Endothelial cell of umbilical vein (primary cell): ENCODE measurements at regions of chr1 and their contacts with region 1.

Region 1: GRCh38 chr1:151098126-151098525 is 27.6 kb downstream of the GABPB2 start:
- DNase-seq: no peak
- H3K4me3 ChIP-seq: no peak overlapping the region
- H3K27ac ChIP-seq: no peak overlapping the region
- H3K4me1 ChIP-seq: no peaks in the 10 kb centered on the region
- H3K27me3 ChIP-seq: no peaks in the 10 kb centered on the region
- CTCF ChIP-seq: no peak
- POLR2A ChIP-seq: no peak

Region 2: GRCh38 chr1:150798525-150798924 is 299.6 kb before region 1 on chr1:
- CTCF ChIA-PET with region 1: no interaction called
- POLR2A ChIA-PET with region 1: no interaction called
- dilution Hi-C with region 1: no loop called
- intact Hi-C with region 1: no loop called
- DNase-seq: no peak
- H3K4me3 ChIP-seq: no peak overlapping the region
- H3K27ac ChIP-seq: no peak overlapping the region
- H3K4me1 ChIP-seq: peaks cover 3% of the 10 kb centered on the region
- H3K27me3 ChIP-seq: no peaks in the 10 kb centered on the region
- CTCF ChIP-seq: no peak
- POLR2A ChIP-seq: no peak

Region 3: GRCh38 chr1:151070474-151071276 is 27.5 kb before region 1 on chr1 and contains the start of gene GABPB2:
- CTCF ChIA-PET with region 1: interaction called, 19 read pairs
- POLR2A ChIA-PET with region 1: interaction called, 5 read pairs
- dilution Hi-C with region 1: no loop called
- intact Hi-C with region 1: no loop called
- DNase-seq: peak; percentile 95
- H3K4me3 ChIP-seq: peak within 1 kb of the TSS; percentile 44 to 73 (median 62)
- H3K27ac ChIP-seq: peak within 1 kb of the TSS; percentile 80
- H3K4me1 ChIP-seq: no peaks in the 10 kb centered on the region
- H3K27me3 ChIP-seq: no peaks in the 10 kb centered on the region
- CTCF ChIP-seq: peak; percentile 79 to 99
- POLR2A ChIP-seq: no peak
- total RNA-seq, gene GABPB2: 4.3 and 5.0 TPM in 2 replicates

Region 4: DNA sequence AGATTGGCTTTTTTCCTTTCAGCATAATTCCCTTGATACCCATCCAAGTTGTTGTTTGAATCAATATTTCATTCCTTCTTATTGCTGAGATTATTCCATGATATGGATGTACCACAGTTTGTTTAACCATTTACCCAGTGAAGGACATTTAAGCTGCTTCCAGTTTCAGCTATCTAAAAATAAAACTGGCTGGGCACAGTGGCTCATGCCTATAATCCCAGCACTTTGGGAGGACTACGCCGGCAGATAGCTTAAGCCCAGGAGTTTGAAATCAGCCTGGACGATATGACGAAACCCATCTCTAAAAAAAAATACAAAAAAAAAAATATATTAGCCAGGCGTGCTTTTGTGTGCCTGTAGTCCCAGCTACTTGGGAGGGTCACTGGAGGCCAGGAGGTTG is 15.8 kb after region 1 on chr1:
- CTCF ChIA-PET with region 1: interaction called, 25 read pairs
- POLR2A ChIA-PET with region 1: no interaction called
- dilution Hi-C with region 1: no loop called
- intact Hi-C with region 1: no loop called
- DNase-seq: no peak
- H3K4me3 ChIP-seq: no peak overlapping the region
- H3K27ac ChIP-seq: no peak overlapping the region
- H3K4me1 ChIP-seq: no peaks in the 10 kb centered on the region
- H3K27me3 ChIP-seq: no peaks in the 10 kb centered on the region
- CTCF ChIP-seq: no peak
- POLR2A ChIP-seq: no peak

Region 5: GRCh38 chr1:151130987-151131586 is 33.0 kb after region 1 on chr1:
- CTCF ChIA-PET with region 1: interaction called, 53 read pairs
- POLR2A ChIA-PET with region 1: no interaction called
- dilution Hi-C with region 1: no loop called
- intact Hi-C with region 1: no loop called
- DNase-seq: peak; percentile 81
- H3K4me3 ChIP-seq: peak overlapping the region in 1 of 3 experiments; percentile 10
- H3K27ac ChIP-seq: no peak overlapping the region
- H3K4me1 ChIP-seq: peaks cover 6% of the 10 kb centered on the region
- H3K27me3 ChIP-seq: no peaks in the 10 kb centered on the region
- CTCF ChIP-seq: no peak
- POLR2A ChIP-seq: peak; percentile 35

Region 6: GRCh38 chr1:151156515-151156819 is 58.3 kb after region 1 on chr1 and contains the start of gene TNFAIP8L2:
- CTCF ChIA-PET with region 1: interaction called, 623 read pairs
- POLR2A ChIA-PET with region 1: interaction called, 16 read pairs
- dilution Hi-C with region 1: no loop called
- intact Hi-C with region 1: loop called (anchors 1 kb)
- DNase-seq: no peak
- H3K4me3 ChIP-seq: no peak within 1 kb of the TSS
- H3K27ac ChIP-seq: peak within 1 kb of the TSS; percentile 25
- H3K4me1 ChIP-seq: peaks cover 18% of the 10 kb centered on the region
- H3K27me3 ChIP-seq: no peaks in the 10 kb centered on the region
- CTCF ChIP-seq: no peak
- POLR2A ChIP-seq: no peak
- total RNA-seq, gene TNFAIP8L2: not detected in 2 replicates

Region 7: GRCh38 chr1:151175910-151176309 is 77.8 kb after region 1 on chr1 and contains the start of gene TMOD4:
- CTCF ChIA-PET with region 1: interaction called, 36 read pairs
- POLR2A ChIA-PET with region 1: no interaction called
- dilution Hi-C with region 1: no loop called
- intact Hi-C with region 1: no loop called
- DNase-seq: peak; percentile 19
- H3K4me3 ChIP-seq: no peak within 1 kb of the TSS
- H3K27ac ChIP-seq: no peak within 1 kb of the TSS
- H3K4me1 ChIP-seq: no peaks in the 10 kb centered on the region
- H3K27me3 ChIP-seq: no peaks in the 10 kb centered on the region
- CTCF ChIP-seq: peak; percentile 47 to 61
- POLR2A ChIP-seq: no peak
- total RNA-seq, gene TMOD4: 1.4 TPM in 2 replicates

Region 8: GRCh38 chr1:151254217-151255213 is 156.4 kb after region 1 on chr1 and contains the start of gene PSMD4:
- CTCF ChIA-PET with region 1: interaction called, 59 read pairs
- POLR2A ChIA-PET with region 1: interaction called, 5 read pairs
- dilution Hi-C with region 1: no loop called
- intact Hi-C with region 1: loop called (anchors 1 kb)
- DNase-seq: peak; percentile 98
- H3K4me3 ChIP-seq: peak within 1 kb of the TSS; percentile 82 to 96 (median 87)
- H3K27ac ChIP-seq: peak within 1 kb of the TSS; percentile 80
- H3K4me1 ChIP-seq: peaks cover 7% of the 10 kb centered on the region
- H3K27me3 ChIP-seq: no peaks in the 10 kb centered on the region
- CTCF ChIP-seq: no peak
- POLR2A ChIP-seq: peak; percentile 96
- total RNA-seq, gene PSMD4: 181 and 184 TPM in 2 replicates